ENCODE measurements at regions of chr4 and their contacts with region 1.

Region 1: DNA sequence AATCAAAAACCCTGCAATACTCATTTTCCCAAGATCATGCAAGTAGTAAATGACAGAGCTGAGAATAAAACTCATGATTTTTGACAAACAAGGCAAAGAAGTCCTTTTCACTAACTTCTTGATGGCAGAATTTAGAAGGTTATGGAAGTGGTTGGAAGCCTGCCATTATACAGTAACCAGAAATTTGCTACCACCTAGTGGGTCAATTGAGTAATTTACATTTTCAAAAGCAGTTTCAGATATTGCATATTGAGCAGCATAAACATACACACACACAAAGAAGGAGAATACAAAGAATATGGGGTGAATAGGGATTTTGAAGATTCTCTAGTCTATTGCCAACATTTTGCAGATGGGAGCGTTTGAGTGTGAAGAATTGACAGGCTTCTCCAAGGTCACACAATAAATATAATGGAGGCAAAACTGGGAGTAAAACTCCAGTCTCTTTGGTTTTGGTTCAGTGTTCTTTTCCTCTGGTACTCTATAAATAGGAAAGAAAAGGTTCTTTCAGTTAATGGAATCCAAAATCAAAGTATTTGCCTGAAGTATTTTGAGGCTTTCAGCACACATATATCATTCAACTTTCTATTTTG is 70.2 kb downstream of the GC start:
- DNase-seq: peak; percentile 9
- H3K4me3 ChIP-seq: no peak overlapping the region
- H3K27ac ChIP-seq: no peak overlapping the region
- H3K4me1 ChIP-seq: no peaks in the 10 kb centered on the region
- H3K27me3 ChIP-seq: no peaks in the 10 kb centered on the region
- CTCF ChIP-seq: peak; percentile 47 to 54

Region 2: GRCh38 chr4:70601422-70602039 is 1112.2 kb before region 1 on chr4:
- CTCF ChIA-PET with region 1: no interaction called
- dilution Hi-C with region 1: no loop called
- in situ Hi-C with region 1: loop called in 1 of 2 experiments (anchors 25 kb)
- intact Hi-C with region 1: no loop called
- DNase-seq: peak; percentile 54
- H3K4me3 ChIP-seq: no peak overlapping the region
- H3K27ac ChIP-seq: no peak overlapping the region
- H3K4me1 ChIP-seq: no peaks in the 10 kb centered on the region
- H3K27me3 ChIP-seq: no peaks in the 10 kb centered on the region
- CTCF ChIP-seq: peak; percentile 77 to 89

Region 3: DNA sequence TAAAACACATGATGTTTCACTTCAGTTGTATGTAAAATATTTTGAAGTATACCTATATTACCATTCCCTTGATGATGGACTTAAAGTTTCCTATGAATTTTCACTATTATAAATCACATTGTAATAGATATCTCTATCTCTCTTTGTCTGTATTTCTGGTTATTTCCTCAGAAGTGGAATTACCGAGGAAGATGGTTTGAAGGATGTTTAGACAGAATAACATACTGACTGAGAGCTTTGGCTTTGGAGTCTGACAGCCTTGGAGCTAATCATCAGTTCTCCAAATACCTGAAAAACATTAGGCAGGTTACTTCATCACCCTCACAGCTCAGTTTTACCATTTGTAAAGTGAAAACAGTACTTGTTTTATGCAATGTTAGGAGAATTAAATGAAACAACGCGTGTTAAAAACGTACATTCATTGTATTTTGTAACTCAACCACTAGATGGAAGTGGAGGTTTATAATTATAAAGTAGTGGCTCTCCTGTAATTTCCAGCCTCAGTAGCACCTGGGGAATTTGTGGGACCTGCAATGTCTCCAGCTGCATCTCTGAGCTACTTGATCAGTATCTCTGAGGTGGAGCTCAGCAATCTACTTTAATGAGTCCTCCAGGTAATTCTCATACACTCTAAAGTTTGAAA is 1061.7 kb before region 1 on chr4:
- CTCF ChIA-PET with region 1: no interaction called
- dilution Hi-C with region 1: no loop called
- in situ Hi-C with region 1: loop called in 1 of 2 experiments (anchors 25 kb)
- intact Hi-C with region 1: no loop called
- DNase-seq: peak; percentile 29
- H3K4me3 ChIP-seq: no peak overlapping the region
- H3K27ac ChIP-seq: no peak overlapping the region
- H3K4me1 ChIP-seq: no peaks in the 10 kb centered on the region
- H3K27me3 ChIP-seq: no peaks in the 10 kb centered on the region
- CTCF ChIP-seq: peak; percentile 51 to 56

Region 4: GRCh38 chr4:71184195-71184781 is 529.4 kb before region 1 on chr4:
- CTCF ChIA-PET with region 1: no interaction called
- dilution Hi-C with region 1: no loop called
- in situ Hi-C with region 1: no loop called
- intact Hi-C with region 1: loop called (anchors 1 kb)
- DNase-seq: peak; percentile 31
- H3K4me3 ChIP-seq: no peak overlapping the region
- H3K27ac ChIP-seq: no peak overlapping the region
- H3K4me1 ChIP-seq: peaks cover 15% of the 10 kb centered on the region
- H3K27me3 ChIP-seq: peaks cover 31% of the 10 kb centered on the region
- CTCF ChIP-seq: peak; percentile 62 to 71

Region 5: GRCh38 chr4:71229477-71230270 is 484.0 kb before region 1 on chr4:
- CTCF ChIA-PET with region 1: no interaction called
- dilution Hi-C with region 1: no loop called
- in situ Hi-C with region 1: loop called (anchors 25 kb)
- intact Hi-C with region 1: loop called (anchors 1 kb)
- DNase-seq: no peak
- H3K4me3 ChIP-seq: no peak overlapping the region
- H3K27ac ChIP-seq: no peak overlapping the region
- H3K4me1 ChIP-seq: no peaks in the 10 kb centered on the region
- H3K27me3 ChIP-seq: no peaks in the 10 kb centered on the region
- CTCF ChIP-seq: peak; percentile 60 to 80

Region 6: DNA sequence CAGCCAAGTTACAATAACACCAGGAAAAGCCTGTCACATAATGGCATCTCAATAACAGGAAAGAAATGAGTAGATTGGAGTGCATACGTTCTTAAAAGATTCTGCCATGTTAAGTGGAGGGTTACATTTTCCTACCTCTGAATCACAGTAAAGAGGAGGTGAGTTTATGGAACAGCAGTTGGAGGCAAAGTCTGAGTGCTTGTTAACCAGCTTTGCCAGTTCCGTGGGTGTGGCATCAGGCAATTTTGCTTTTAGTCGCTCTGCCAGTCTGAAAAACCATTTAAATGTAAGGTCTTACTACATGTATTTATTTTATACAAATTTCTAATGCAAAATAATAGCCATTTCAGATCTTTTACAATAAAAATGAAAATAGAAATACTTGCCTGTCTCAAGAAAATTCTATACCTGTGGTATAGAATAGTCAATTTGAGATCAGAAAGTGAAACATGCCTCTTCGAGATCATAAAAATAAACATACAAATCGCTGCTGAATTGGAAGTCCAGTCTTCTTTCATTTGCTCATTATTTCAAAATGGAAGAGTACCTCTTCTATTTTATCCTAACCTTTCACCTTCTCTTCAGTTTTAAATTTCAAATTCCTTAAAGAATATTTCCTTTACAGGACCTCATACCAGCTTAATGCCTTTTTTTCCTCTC is 38.8 kb after region 1 on chr4:
- CTCF ChIA-PET with region 1: no interaction called
- dilution Hi-C with region 1: no loop called
- in situ Hi-C with region 1: no loop called
- intact Hi-C with region 1: no loop called
- DNase-seq: no peak
- H3K4me3 ChIP-seq: no peak overlapping the region
- H3K27ac ChIP-seq: no peak overlapping the region
- H3K4me1 ChIP-seq: no peaks in the 10 kb centered on the region
- H3K27me3 ChIP-seq: no peaks in the 10 kb centered on the region
- CTCF ChIP-seq: no peak

Measured in mammary epithelial cell (primary cell).